HepG2 (cell line): ENCODE measurements at regions of chr18 and their contacts with region 1.

Region 1: DNA sequence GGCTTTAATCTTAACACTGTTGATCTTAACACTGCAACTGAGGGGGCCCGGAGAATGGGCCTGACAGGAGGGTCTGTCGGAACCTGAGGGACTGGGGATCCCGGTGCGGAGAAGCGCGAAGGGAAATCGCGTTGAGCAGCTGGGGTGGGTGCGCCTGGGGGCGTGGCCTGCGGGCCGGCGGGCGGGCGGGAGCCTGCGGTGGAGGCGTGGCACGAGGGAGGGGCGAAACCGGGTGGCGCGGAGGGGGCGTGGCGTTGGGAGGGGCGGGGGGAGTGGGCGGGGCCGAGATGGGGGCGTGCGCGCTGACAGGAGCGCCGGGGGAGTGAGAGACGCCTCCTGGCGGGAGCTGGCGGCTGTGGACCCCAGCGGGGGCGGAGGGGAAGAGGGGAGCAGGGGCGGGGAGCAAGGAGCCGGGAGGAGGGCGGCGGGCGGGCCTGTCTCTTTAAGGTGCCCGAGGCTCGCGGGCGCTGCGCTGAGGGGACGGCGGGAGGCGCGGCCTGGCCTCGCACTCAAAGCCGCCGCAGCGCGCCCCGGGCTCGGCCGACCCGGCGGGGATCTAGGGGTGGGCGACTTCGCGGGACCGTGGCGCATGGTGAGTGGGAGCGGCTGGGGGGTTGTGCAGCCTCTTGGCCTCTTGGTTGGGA is at the start of gene TWSG1:
- DNase-seq: peak; percentile 72
- ATAC-seq: peak; percentile 93
- H3K4me3 ChIP-seq: peak within 1 kb of the TSS; percentile 74 to 91 (median 82)
- H3K27ac ChIP-seq: no peak within 1 kb of the TSS
- H3K4me1 ChIP-seq: peaks cover 22% of the 10 kb centered on the region
- H3K27me3 ChIP-seq: peaks cover 0 to 3% of the 10 kb centered on the region in 2 experiments; a peak in 2 of 5 replicates
- CTCF ChIP-seq: peak; percentile 62
- EP300 ChIP-seq: no peak
- POLR2A ChIP-seq: peak in 1 of 2 experiments; percentile 38; a peak in 1 of 4 replicates
- RAD21 ChIP-seq: 0 out of 2 replicates have a peak, but pooled peaks have one; percentile 15
- total RNA-seq, gene TWSG1: 8.0 and 9.4 TPM in 2 replicates

Region 2: DNA sequence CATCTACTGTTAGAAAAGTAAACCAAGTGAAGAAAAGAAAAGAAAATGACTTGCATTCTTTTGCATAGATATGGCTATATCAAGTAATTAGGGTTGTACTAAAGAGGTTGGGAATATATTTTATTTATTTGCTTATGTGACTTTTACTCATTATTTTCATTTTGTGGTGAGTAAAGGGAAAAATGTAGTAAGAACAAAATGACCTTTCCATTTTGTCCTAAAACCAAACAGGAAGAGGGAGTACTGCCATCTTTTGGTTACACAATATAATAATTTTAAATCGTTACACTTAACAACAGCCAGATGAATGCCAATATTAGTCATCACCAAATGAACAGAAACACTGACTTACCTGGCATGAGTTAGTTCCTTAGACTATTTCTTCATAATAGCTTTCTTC is 279.3 kb before region 1 on chr18:
- CTCF ChIA-PET with region 1: no interaction called
- POLR2A ChIA-PET with region 1: no interaction called
- in situ Hi-C with region 1: loop called (anchors 25 kb)
- intact Hi-C with region 1: no loop called
- DNase-seq: no peak
- ATAC-seq: no peak
- H3K4me3 ChIP-seq: no peak overlapping the region
- H3K27ac ChIP-seq: no peak overlapping the region
- H3K4me1 ChIP-seq: peaks cover 14% of the 10 kb centered on the region
- H3K27me3 ChIP-seq: no peaks in the 10 kb centered on the region
- CTCF ChIP-seq: no peak
- EP300 ChIP-seq: no peak
- POLR2A ChIP-seq: no peak
- RAD21 ChIP-seq: no peak

Region 3: DNA sequence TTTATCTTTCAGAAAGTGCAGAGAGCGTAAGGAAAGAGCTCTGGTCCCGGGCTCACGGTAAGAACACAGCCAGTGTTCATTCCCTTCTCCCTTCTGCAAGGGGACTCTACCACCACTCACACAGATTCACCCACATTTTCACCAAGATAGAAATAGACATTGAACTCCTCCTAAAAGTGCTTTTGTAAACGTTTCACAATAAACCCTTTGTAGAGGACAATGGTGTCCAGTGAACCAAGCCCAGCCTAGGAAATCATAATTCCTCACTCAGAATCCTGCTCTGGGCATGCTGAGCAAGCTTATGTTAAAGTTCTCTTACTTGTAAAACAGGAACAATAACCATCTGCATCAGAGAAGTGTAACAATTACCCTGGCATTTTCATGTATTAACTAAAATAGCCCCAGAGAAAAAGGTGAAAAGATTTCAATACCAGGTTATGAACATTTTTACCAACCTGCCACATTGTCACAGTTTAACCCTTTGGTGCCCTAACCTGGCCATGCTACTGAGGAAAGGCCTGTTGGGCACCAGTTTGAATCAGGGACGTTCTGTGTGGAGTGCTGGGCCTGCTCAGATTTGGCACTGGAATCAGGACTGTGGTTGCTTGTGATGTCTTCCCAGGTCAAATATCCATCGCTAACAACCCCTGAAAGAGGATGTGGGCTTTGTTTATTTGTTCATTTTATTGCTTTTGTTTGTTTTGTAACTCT is 254.5 kb before region 1 on chr18:
- CTCF ChIA-PET with region 1: no interaction called
- POLR2A ChIA-PET with region 1: no interaction called
- in situ Hi-C with region 1: no loop called
- intact Hi-C with region 1: loop called (anchors 10 kb)
- DNase-seq: peak; percentile 74
- ATAC-seq: peak; percentile 88
- H3K4me3 ChIP-seq: peak overlapping the region; percentile 26 to 48 (median 41); a peak in 5 of 6 replicates
- H3K27ac ChIP-seq: peak overlapping the region; percentile 39
- H3K4me1 ChIP-seq: peaks cover 41% of the 10 kb centered on the region
- H3K27me3 ChIP-seq: no peaks in the 10 kb centered on the region
- CTCF ChIP-seq: no peak
- EP300 ChIP-seq: no peak
- POLR2A ChIP-seq: no peak
- RAD21 ChIP-seq: no peak

Region 4: GRCh38 chr18:9217743-9218451 is 116.6 kb before region 1 on chr18:
- CTCF ChIA-PET with region 1: no interaction called
- POLR2A ChIA-PET with region 1: no interaction called
- in situ Hi-C with region 1: no loop called
- intact Hi-C with region 1: loop called (anchors 10 kb)
- DNase-seq: no peak
- ATAC-seq: no peak
- H3K4me3 ChIP-seq: no peak overlapping the region
- H3K27ac ChIP-seq: no peak overlapping the region
- H3K4me1 ChIP-seq: peaks cover 34% of the 10 kb centered on the region
- H3K27me3 ChIP-seq: no peaks in the 10 kb centered on the region
- CTCF ChIP-seq: no peak
- EP300 ChIP-seq: no peak
- POLR2A ChIP-seq: no peak
- RAD21 ChIP-seq: no peak

Region 5: GRCh38 chr18:9474983-9475642 is 140.7 kb after region 1 on chr18 and contains the start of gene RALBP1:
- CTCF ChIA-PET with region 1: no interaction called
- POLR2A ChIA-PET with region 1: no interaction called
- in situ Hi-C with region 1: loop called (anchors 5 kb)
- intact Hi-C with region 1: loop called (anchors 1 kb)
- DNase-seq: peak; percentile 98
- ATAC-seq: peak; percentile 95
- H3K4me3 ChIP-seq: peak within 1 kb of the TSS; percentile 83 to 93 (median 92)
- H3K27ac ChIP-seq: peak within 1 kb of the TSS; percentile 74
- H3K4me1 ChIP-seq: peaks cover 29% of the 10 kb centered on the region
- H3K27me3 ChIP-seq: no peaks in the 10 kb centered on the region; a peak in 1 of 5 replicates
- CTCF ChIP-seq: peak; percentile 60
- EP300 ChIP-seq: no peak
- POLR2A ChIP-seq: peak; percentile 78 to 98
- RAD21 ChIP-seq: peak; percentile 51; the same call in 1 of the 2 replicates
- total RNA-seq, gene RALBP1: 33.1 and 39.9 TPM in 2 replicates

Region 6: DNA sequence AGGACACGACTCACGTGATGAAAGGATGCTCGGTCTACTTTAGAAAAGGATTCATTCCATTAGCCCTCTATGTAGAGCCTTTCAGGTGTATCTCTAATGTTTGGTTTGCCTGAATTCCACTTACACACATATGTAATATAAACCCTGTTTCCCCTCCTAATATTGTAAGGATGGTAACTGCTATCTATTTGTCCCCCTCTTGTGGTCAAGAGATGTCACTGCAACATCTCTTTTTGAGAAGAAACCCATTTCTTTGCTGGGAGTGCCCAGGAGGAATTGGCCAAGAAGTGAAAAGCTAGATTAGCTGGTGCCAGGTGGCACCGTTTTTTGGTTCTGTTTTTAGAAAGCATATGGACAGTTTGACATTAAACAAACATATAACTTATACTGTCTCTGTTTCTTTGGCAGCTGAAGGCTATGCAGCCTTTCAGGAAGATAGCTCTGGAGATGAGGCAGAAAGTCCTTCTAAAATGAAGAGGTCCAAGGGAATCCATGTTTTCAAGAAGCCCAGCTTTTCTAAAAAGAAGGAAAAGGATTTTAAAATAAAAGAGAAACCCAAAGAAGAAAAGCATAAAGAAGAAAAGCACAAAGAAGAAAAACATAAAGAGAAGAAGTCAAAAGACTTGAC is 182.1 kb after region 1 on chr18:
- CTCF ChIA-PET with region 1: no interaction called
- POLR2A ChIA-PET with region 1: interaction called, 4 read pairs
- in situ Hi-C with region 1: no loop called
- intact Hi-C with region 1: loop called (anchors 5 kb)
- DNase-seq: peak; percentile 14
- ATAC-seq: no peak
- H3K4me3 ChIP-seq: no peak overlapping the region
- H3K27ac ChIP-seq: no peak overlapping the region
- H3K4me1 ChIP-seq: peaks cover 17% of the 10 kb centered on the region
- H3K27me3 ChIP-seq: no peaks in the 10 kb centered on the region
- CTCF ChIP-seq: peak; percentile 79
- EP300 ChIP-seq: no peak
- POLR2A ChIP-seq: no peak
- RAD21 ChIP-seq: peak; percentile 56; the same call in 1 of the 2 replicates